ENCODE measurements at regions of chr3 and their contacts with region 1.

Region 1: DNA sequence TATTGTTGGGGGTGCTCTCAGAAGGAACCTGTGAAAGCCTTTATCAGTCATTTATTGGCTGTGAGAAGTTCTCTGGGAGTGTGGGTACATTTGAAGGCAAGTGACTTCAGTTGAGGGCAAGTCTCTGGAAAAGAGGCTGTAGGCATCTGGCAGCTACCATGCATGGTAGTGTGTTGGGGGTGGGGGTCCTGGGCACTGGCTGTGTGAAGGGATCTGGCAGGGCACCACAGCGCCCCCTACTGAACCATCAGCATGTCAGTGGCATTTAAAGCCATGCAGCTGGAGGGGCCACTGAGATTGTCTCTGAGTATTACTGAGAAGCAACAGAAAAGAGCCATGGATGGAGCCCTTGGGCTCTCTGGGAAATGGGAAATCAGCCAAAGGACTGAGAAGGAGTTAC is 30.6 kb downstream of the CRTAP start:
- DNase-seq: no peak
- H3K4me3 ChIP-seq: no peak overlapping the region
- H3K27ac ChIP-seq: no peak overlapping the region
- H3K4me1 ChIP-seq: peaks cover 0 to 6% (median 0%) of the 10 kb centered on the region in 4 donors
- H3K27me3 ChIP-seq: no peaks in the 10 kb centered on the region
- CTCF ChIP-seq: peak in 1 of 5 experiments; percentile 8
- EP300 ChIP-seq: no peak
- POLR2A ChIP-seq: no peak

Region 2: GRCh38 chr3:33008282-33008681 is 136.2 kb before region 1 on chr3:
- in situ Hi-C with region 1: no loop called
- intact Hi-C with region 1: no loop called
- DNase-seq: no peak
- H3K4me3 ChIP-seq: no peak overlapping the region
- H3K27ac ChIP-seq: no peak overlapping the region
- H3K4me1 ChIP-seq: peaks cover 0 to under 1% (median 0%) of the 10 kb centered on the region in 4 donors
- H3K27me3 ChIP-seq: no peaks in the 10 kb centered on the region
- CTCF ChIP-seq: no peak
- EP300 ChIP-seq: no peak
- POLR2A ChIP-seq: no peak

Region 3: GRCh38 chr3:33360136-33360825 is 215.8 kb after region 1 on chr3:
- in situ Hi-C with region 1: loop called in 2 of 4 experiments (anchors 10 to 25 kb)
- intact Hi-C with region 1: loop called (anchors 10 kb)
- DNase-seq: no peak
- H3K4me3 ChIP-seq: no peak overlapping the region
- H3K27ac ChIP-seq: no peak overlapping the region
- H3K4me1 ChIP-seq: peaks cover 0 to 17% (median 10%) of the 10 kb centered on the region in 4 donors
- H3K27me3 ChIP-seq: no peaks in the 10 kb centered on the region
- CTCF ChIP-seq: no peak
- EP300 ChIP-seq: no peak
- POLR2A ChIP-seq: no peak

Measured in transverse colon (tissue), 4 donors.